ENCODE measurements at regions of chr3 and their contacts with region 1.

Region 1: GRCh38 chr3:153768561-153769469 is 352.4 kb upstream of the ARHGEF26 start:
- DNase-seq: peak; percentile 71
- H3K4me3 ChIP-seq: no peak overlapping the region
- H3K27ac ChIP-seq: no peak overlapping the region
- H3K4me1 ChIP-seq: no peaks in the 10 kb centered on the region
- H3K27me3 ChIP-seq: peaks cover 0 to 4% (median 0%) of the 10 kb centered on the region in 7 donors
- CTCF ChIP-seq: peak; percentile 49 to 80 (median 77)
- POLR2A ChIP-seq: no peak

Region 2: GRCh38 chr3:153026026-153026425 is 742.8 kb before region 1 on chr3:
- intact Hi-C with region 1: loop called (anchors 5 kb)
- DNase-seq: no peak
- H3K4me3 ChIP-seq: no peak overlapping the region
- H3K27ac ChIP-seq: no peak overlapping the region
- H3K4me1 ChIP-seq: no peaks in the 10 kb centered on the region
- H3K27me3 ChIP-seq: peaks cover 0 to under 1% (median 0%) of the 10 kb centered on the region in 7 donors
- CTCF ChIP-seq: peak in 10 of 11 experiments; percentile 15 to 65 (median 48)
- POLR2A ChIP-seq: no peak

Region 3: DNA sequence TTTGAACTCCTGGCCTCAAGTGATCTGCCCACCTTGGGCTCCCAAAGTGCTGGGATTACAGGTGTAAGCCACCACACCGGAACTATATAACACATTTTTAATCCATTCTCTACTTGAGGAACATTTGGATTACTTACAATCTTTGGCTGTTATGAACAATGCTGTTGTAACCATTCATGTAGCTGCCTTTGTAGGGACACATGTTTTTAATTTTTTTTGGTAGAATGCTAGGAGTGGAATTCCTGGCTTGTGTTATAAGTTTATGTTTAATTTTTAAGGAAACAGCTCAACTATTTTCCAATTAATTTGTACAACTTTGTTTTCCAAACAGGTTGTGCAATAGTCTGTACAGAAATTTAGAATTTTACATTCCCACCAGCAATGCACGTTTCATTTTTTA is 609.5 kb after region 1 on chr3:
- intact Hi-C with region 1: no loop called
- DNase-seq: no peak
- H3K4me3 ChIP-seq: no peak overlapping the region
- H3K27ac ChIP-seq: no peak overlapping the region
- H3K4me1 ChIP-seq: no peaks in the 10 kb centered on the region
- H3K27me3 ChIP-seq: no peaks in the 10 kb centered on the region
- CTCF ChIP-seq: no peak
- POLR2A ChIP-seq: no peak